ENCODE measurements at regions of chr1 and their contacts with region 1.

Region 1: DNA sequence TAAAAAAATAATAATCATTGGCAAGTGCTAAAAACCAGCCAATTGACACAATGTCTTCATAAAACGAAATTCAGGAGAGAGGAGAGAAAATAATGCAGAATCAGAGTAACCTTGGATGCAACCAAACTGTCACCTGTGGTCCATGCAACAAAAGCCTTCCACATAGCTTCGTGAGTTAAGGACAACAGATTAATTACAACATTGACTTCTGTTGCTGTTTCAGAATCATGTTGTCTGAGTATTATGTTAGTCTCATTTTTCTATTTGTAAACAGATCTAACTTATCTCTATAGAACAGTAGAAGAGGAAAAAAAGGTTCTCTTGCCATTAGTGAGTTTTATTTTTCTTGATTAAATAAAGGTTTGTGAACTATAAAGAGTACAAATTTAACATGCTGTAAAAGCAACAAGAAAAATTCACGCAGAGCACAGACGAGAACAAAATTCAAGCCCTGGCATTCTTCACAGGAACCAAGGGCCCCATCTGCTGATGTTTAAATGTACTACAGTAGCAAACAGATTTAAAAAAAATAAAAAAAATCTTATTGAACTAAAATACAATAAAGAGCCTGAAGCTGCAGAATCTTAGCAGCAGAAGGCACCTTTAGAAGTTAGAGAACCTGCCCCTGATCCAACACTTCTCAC is 381.1 kb upstream of the PKN2 start:
- DNase-seq: peak in 1 of 2 experiments; percentile 10
- H3K4me3 ChIP-seq: no peak overlapping the region
- H3K27ac ChIP-seq: no peak overlapping the region
- H3K4me1 ChIP-seq: no peaks in the 10 kb centered on the region
- H3K27me3 ChIP-seq: no peaks in the 10 kb centered on the region
- CTCF ChIP-seq: peak; percentile 77

Region 2: DNA sequence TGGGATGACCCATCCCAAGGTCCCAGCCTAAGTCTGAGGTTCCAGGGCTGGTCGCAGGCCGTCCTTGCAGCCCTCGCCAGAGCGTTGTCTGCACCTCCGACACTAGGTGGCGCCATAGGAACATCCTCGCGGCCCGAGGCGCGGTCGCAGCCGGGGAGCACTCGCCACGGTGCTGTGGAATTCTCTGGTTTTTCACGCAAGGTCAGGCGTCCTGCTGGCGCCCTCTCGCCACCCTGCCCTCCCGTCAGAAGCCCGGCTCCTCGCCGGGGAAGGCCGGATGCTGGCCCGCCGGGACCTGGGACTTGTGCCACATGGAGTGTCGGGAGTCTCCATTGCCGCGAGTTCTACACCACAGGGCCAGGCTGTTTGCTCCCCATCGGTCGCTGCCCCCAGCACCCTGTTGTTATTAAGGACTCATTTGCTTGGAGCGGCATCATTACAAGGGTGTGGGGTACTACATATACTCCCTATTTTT is 1171.1 kb before region 1 on chr1:
- CTCF ChIA-PET with region 1: no interaction called
- POLR2A ChIA-PET with region 1: no interaction called
- intact Hi-C with region 1: loop called (anchors 2 kb)
- DNase-seq: peak; percentile 55 to 69
- H3K4me3 ChIP-seq: peak overlapping the region; percentile 46; the same call in 1 of the 2 replicates
- H3K27ac ChIP-seq: no peak overlapping the region
- H3K4me1 ChIP-seq: 0 out of 2 replicates have a peak, but pooled peaks cover 12% of the 10 kb centered on the region
- H3K27me3 ChIP-seq: no peaks in the 10 kb centered on the region
- CTCF ChIP-seq: peak; percentile 97

Region 3: GRCh38 chr1:87292684-87293493 is 1010.1 kb before region 1 on chr1:
- CTCF ChIA-PET with region 1: no interaction called
- POLR2A ChIA-PET with region 1: no interaction called
- intact Hi-C with region 1: loop called (anchors 2 kb)
- DNase-seq: peak; percentile 42 to 48
- H3K4me3 ChIP-seq: no peak overlapping the region
- H3K27ac ChIP-seq: no peak overlapping the region
- H3K4me1 ChIP-seq: no peaks in the 10 kb centered on the region
- H3K27me3 ChIP-seq: no peaks in the 10 kb centered on the region
- CTCF ChIP-seq: peak; percentile 96

Region 4: GRCh38 chr1:87794788-87795614 is 508.0 kb before region 1 on chr1:
- CTCF ChIA-PET with region 1: no interaction called
- POLR2A ChIA-PET with region 1: no interaction called
- intact Hi-C with region 1: loop called (anchors 2 kb)
- DNase-seq: peak; percentile 54 to 93
- H3K4me3 ChIP-seq: no peak overlapping the region
- H3K27ac ChIP-seq: peak overlapping the region; percentile 38
- H3K4me1 ChIP-seq: peaks cover 20% of the 10 kb centered on the region
- H3K27me3 ChIP-seq: no peaks in the 10 kb centered on the region
- CTCF ChIP-seq: no peak

Region 5: DNA sequence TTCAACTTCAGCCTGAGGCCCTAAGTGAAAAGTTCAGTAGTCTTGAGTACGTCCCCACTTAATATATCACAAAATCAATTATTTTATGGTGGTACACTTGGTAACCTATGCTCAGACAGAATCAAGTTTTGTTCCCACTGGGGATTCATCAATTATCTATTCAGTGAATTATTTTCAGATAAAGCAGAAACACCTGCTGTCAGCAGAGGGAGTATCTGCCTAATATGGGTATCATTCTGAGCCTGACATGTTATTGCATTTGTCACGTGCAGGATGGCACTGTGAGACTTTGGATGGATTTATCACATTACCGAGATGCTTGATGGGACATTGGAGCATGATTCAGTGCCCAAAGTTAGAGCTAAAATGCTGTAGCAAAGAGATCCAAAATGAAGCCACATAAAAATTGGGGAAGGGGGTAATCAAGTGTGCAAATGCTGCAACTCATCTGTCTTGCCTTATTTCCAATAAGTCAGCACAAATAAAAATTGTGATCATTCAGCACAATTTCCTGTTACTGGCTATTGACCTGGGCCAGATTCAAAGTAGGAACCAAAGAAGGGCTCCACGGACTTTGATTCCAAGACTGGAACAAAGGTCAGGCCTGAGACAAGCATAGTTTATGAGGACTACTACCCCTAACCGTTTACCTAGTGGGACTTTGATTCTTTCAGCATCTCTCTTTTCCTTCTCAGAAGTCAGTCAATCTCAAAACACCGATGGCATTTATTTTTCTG is 316.7 kb before region 1 on chr1:
- CTCF ChIA-PET with region 1: no interaction called
- POLR2A ChIA-PET with region 1: no interaction called
- intact Hi-C with region 1: loop called (anchors 10 kb)
- DNase-seq: no peak
- H3K4me3 ChIP-seq: no peak overlapping the region
- H3K27ac ChIP-seq: no peak overlapping the region
- H3K4me1 ChIP-seq: no peaks in the 10 kb centered on the region
- H3K27me3 ChIP-seq: no peaks in the 10 kb centered on the region
- CTCF ChIP-seq: peak; percentile 48; the same call in 1 of the 2 replicates

Region 6: DNA sequence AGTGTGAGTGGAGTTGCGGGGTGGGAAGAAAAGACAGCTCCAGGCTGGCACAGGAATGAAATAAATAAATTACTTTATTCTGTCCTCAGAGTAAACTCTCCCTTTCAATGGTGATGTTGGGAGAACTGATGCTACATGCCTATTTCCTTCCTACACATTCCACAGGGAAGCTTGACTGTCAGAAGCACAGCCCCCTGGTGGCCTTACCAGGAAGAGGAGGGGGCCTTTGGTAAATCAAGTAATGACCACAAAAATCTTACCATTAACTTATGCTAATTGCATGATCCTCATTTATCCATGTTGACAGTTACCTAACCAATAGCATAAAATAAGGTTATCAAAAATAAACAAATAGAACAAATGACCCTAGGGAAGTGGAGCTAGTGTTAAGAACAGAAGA is 223.9 kb before region 1 on chr1:
- CTCF ChIA-PET with region 1: no interaction called
- POLR2A ChIA-PET with region 1: no interaction called
- intact Hi-C with region 1: loop called (anchors 10 kb)
- DNase-seq: no peak
- H3K4me3 ChIP-seq: no peak overlapping the region
- H3K27ac ChIP-seq: no peak overlapping the region
- H3K4me1 ChIP-seq: peaks cover 18% of the 10 kb centered on the region
- H3K27me3 ChIP-seq: no peaks in the 10 kb centered on the region
- CTCF ChIP-seq: peak; percentile 46; the same call in 1 of the 2 replicates

Region 7: DNA sequence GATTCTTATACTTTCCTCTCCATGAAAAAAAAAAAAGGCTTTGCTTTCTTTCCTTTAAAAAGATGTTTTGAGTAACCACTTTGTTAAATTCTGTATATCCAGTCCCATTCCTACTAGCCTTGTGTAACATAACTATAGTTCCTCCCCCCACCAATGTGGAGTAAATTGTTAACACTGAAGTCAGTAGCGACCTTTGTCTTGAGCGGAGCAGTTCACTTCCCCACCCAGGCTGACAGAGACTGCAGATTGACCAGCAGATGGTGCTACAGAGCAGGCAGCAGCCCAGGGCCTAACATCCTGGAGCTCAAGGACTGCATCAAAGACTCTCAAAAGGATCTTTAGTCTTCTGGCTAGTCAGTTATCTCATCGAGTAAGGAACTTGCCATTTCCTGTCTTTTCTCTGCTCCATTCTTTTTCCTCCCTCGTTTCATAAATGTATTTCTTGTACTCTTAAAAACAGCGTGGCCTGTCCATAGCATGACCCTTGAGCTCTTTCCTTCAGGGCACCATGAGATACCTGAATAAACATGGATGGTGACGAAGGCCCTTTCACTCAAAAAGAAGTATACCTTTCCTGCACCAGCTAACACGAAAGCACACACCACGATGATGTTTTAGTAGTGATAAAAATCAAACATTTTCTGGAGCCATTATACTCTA is 122.4 kb before region 1 on chr1:
- CTCF ChIA-PET with region 1: interaction called, 3 read pairs
- POLR2A ChIA-PET with region 1: no interaction called
- intact Hi-C with region 1: loop called (anchors 1 kb)
- DNase-seq: peak; percentile 45 to 63
- H3K4me3 ChIP-seq: no peak overlapping the region
- H3K27ac ChIP-seq: no peak overlapping the region
- H3K4me1 ChIP-seq: peaks cover 8% of the 10 kb centered on the region
- H3K27me3 ChIP-seq: no peaks in the 10 kb centered on the region
- CTCF ChIP-seq: peak; percentile 95

Region 8: DNA sequence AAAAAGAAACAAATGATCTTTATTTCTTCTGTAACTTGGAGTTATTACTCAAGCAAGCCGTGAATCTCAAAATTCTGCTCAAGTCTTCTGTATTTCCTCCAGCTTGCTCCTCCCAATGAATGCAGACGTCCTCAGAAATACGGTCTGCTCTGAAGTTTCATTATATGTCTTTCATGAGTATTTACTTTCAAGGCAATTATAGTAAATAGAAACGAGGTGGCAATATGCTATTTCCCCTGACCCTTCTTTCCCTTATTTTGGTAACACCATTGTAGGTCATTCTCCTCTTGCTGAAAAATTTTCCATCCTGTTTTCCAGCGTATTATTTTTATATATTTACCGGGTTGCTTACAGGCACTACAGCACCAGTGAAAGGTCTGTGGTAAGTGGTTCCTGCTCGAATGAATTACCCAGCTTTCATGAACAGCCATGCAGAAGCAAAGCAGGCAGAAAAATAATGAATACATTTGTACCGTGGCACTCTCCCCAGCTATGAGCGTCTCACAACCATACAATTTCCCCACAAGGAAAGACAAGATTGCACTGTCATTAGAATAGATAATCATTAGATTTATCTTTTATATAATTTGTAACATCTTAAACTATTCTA is 30.2 kb after region 1 on chr1:
- CTCF ChIA-PET with region 1: no interaction called
- POLR2A ChIA-PET with region 1: no interaction called
- intact Hi-C with region 1: no loop called
- DNase-seq: no peak
- H3K4me3 ChIP-seq: no peak overlapping the region
- H3K27ac ChIP-seq: no peak overlapping the region
- H3K4me1 ChIP-seq: no peaks in the 10 kb centered on the region
- H3K27me3 ChIP-seq: no peaks in the 10 kb centered on the region
- CTCF ChIP-seq: no peak